ENCODE measurements at regions of chr1 and their contacts with region 1.

Region 1: GRCh38 chr1:203117611-203118575 is 9.6 kb upstream of the ADORA1 start:
- DNase-seq: peak; percentile 63 to 81 (median 76)
- H3K4me3 ChIP-seq: no peak overlapping the region
- H3K27ac ChIP-seq: no peak overlapping the region
- H3K4me1 ChIP-seq: no peaks in the 10 kb centered on the region
- H3K27me3 ChIP-seq: peaks cover 42% of the 10 kb centered on the region
- CTCF ChIP-seq: peak; percentile 64 to 84 (median 74)
- POLR2A ChIP-seq: no peak

Region 2: DNA sequence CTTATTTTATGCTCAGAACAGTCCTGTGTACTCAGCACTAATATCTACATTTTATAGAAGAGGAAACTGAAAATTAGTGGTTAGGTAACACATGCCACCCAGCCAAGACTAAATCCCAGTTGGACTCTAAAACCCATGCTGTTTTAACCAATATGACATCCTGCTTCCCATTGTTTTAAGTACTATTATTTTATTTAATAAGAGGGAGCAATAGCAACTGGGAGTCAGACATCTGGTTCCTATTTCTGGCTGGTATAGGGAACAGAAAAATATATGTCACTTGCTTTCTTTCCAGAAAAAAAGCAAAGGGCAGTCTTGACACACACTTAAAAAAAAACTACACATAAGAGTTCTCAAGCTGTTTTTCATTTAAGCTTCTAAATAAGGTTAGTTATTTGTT is 202.7 kb before region 1 on chr1:
- intact Hi-C with region 1: no loop called
- DNase-seq: no peak
- H3K4me3 ChIP-seq: no peak overlapping the region
- H3K27ac ChIP-seq: no peak overlapping the region
- H3K4me1 ChIP-seq: no peaks in the 10 kb centered on the region
- H3K27me3 ChIP-seq: no peaks in the 10 kb centered on the region
- CTCF ChIP-seq: no peak
- POLR2A ChIP-seq: no peak

Region 3: GRCh38 chr1:202982715-202983430 is 135.0 kb before region 1 on chr1:
- intact Hi-C with region 1: no loop called
- DNase-seq: no peak
- H3K4me3 ChIP-seq: no peak overlapping the region
- H3K27ac ChIP-seq: no peak overlapping the region
- H3K4me1 ChIP-seq: no peaks in the 10 kb centered on the region
- H3K27me3 ChIP-seq: peaks cover 6% of the 10 kb centered on the region
- CTCF ChIP-seq: no peak
- POLR2A ChIP-seq: no peak

Region 4: GRCh38 chr1:203038891-203039608 is 78.8 kb before region 1 on chr1:
- intact Hi-C with region 1: loop called in 1 of 2 experiments (anchors 10 kb)
- DNase-seq: peak; percentile 66 to 90 (median 77)
- H3K4me3 ChIP-seq: no peak overlapping the region
- H3K27ac ChIP-seq: no peak overlapping the region
- H3K4me1 ChIP-seq: no peaks in the 10 kb centered on the region
- H3K27me3 ChIP-seq: peaks cover 6% of the 10 kb centered on the region
- CTCF ChIP-seq: peak; percentile 76 to 95 (median 90)
- POLR2A ChIP-seq: no peak

Region 5: DNA sequence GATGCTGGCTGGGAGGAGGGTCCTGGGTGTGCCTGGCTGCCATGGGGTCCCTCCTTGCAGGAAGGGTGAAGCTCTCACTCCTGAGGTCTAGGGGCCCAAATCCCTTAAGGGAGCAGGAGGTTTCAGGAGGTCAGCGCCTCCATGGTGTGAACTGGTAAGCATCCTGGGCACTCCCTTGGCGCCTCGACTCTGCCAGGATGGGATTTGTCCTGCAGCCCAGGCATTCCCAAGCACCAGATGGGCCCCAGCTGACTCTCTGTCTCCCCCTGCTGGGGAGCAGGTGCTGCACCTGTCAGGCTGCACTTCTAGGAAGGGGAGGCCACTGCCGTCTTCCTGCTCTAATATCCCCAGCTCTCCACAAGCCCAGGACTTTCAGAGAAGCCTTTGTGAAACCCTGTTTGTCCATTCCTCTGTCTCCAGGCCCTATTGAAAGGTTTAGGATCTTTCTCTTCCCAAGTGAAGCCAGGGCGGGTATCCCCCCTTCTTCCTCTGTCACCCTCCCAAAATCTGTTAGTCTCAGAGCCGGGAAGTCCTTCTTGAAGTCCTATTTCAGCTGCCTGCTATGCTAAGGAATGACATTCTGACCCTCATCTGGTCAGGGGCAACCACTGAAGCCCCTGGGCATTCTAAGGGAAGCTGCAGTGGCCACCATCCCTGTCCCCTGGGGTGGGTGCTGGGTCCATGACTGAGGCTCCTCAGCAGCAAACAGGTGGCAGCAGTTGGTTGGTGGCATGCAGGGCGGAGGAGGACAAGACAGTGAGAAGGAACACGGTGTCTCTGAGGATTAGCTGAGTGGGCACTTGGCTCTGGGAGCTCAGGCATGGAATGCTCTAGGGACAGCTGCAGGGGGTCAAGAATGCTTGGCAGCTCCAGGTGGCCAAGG is 54.5 kb after region 1 on chr1:
- intact Hi-C with region 1: loop called in 1 of 2 experiments (anchors 5 kb)
- DNase-seq: peak; percentile 50 to 78 (median 65)
- H3K4me3 ChIP-seq: no peak overlapping the region
- H3K27ac ChIP-seq: no peak overlapping the region
- H3K4me1 ChIP-seq: peaks cover under 1 to 2% of the 10 kb centered on the region in 2 donors
- H3K27me3 ChIP-seq: no peaks in the 10 kb centered on the region
- CTCF ChIP-seq: peak; percentile 71 to 87 (median 78)
- POLR2A ChIP-seq: no peak

Region 6: DNA sequence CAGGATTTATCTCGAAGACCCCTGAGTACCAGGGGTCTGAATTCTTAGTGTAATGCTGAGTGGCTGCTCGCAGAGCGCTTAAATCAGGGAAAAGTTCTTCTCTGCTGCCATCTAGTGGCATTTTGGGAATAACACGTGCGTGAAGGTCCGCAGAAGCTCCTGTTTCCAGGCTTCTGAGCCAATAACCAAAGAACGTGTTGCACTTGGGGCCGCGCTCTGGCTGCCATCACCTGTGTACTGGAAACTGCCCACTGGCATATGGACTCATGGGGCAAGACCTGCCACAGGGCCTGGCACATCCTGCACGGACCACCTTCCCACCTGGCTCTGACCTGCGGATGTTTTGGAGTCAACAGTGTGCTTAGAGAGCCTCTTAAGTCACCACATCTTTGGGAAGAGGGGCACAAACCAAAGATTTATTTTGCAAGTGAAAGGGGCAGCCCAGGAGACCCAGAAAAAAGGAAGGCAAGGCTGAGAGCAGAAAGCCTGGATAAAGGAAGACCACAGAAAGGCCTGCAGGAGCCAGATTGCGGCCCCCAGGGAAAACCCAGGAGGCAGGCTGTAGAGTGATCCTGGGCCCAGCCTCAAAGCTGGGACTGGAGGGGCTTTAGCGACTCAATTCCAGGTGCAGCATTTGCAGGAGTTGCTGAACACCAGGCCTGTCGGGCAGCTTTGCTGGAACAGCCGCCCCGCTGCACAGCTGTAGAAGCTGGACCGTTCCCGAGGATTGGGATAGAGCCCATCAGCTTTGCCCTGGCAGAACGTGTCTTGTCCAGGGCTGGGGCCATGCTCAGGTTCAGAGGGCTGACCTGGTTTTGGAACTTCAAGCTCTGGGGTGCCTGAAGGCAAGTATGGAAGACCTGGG is 98.6 kb after region 1 on chr1:
- intact Hi-C with region 1: loop called (anchors 2 to 5 kb)
- DNase-seq: peak; percentile 30 to 78 (median 66)
- H3K4me3 ChIP-seq: no peak overlapping the region
- H3K27ac ChIP-seq: no peak overlapping the region
- H3K4me1 ChIP-seq: no peaks in the 10 kb centered on the region
- H3K27me3 ChIP-seq: peaks cover 6% of the 10 kb centered on the region
- CTCF ChIP-seq: peak; percentile 62 to 82 (median 75)
- POLR2A ChIP-seq: no peak